ENCODE measurements at regions of chrX and their contacts with region 1.

Region 1: DNA sequence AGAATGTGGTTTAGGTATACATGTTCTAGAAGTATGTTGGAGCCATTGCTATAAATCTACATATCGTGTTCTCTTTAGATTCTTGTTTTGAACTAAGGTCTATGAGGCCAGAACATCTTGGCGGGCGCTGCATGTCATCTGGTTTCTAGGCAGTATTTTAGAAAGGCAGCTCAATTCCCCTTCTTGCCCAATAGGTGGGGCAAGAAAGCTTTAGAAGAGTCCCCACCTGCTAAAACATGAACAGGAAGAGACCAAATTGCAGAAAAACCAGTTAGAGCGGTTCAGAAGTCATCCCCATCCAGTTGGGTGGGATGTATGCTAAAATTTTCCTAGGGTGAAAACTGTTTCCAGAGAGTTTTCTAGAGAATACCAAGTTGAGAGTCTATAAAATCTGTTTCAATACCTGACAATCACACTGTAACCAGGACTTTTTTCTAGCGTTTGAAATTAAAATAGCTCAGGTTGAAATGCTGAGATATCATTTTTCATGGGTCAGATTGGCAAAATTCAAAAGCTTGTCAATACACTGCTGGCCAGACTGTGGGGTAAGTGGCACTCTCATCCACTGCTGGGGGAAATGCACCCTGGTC is 17.5 kb upstream of the SH3KBP1 start:
- DNase-seq: peak; percentile 32
- ATAC-seq: peak; percentile 75
- H3K4me3 Mint-ChIP-seq: no peak overlapping the region
- H3K27ac Mint-ChIP-seq: no peak overlapping the region
- H3K4me1 Mint-ChIP-seq: peaks cover 20% of the 10 kb centered on the region
- H3K27me3 Mint-ChIP-seq: no peaks in the 10 kb centered on the region

Region 2: GRCh38 chrX:19698125-19698524 is 206.7 kb before region 1 on chrX:
- CTCF ChIA-PET with region 1: no interaction called
- POLR2A ChIA-PET with region 1: no interaction called
- DNase-seq: no peak
- ATAC-seq: no peak
- H3K4me3 Mint-ChIP-seq: no peak overlapping the region
- H3K27ac Mint-ChIP-seq: no peak overlapping the region
- H3K4me1 Mint-ChIP-seq: peaks cover 41% of the 10 kb centered on the region
- H3K27me3 Mint-ChIP-seq: no peaks in the 10 kb centered on the region

Region 3: GRCh38 chrX:19725641-19726040 is 179.2 kb before region 1 on chrX:
- CTCF ChIA-PET with region 1: no interaction called
- POLR2A ChIA-PET with region 1: no interaction called
- DNase-seq: peak; percentile 27
- ATAC-seq: peak; percentile 78
- H3K4me3 Mint-ChIP-seq: no peak overlapping the region
- H3K27ac Mint-ChIP-seq: peak overlapping the region; percentile 74
- H3K4me1 Mint-ChIP-seq: peaks cover 60% of the 10 kb centered on the region
- H3K27me3 Mint-ChIP-seq: no peaks in the 10 kb centered on the region

Region 4: GRCh38 chrX:19824603-19825002 is 80.3 kb before region 1 on chrX:
- CTCF ChIA-PET with region 1: no interaction called
- POLR2A ChIA-PET with region 1: no interaction called
- DNase-seq: peak; percentile 37
- ATAC-seq: peak; percentile 39
- H3K4me3 Mint-ChIP-seq: no peak overlapping the region
- H3K27ac Mint-ChIP-seq: no peak overlapping the region
- H3K4me1 Mint-ChIP-seq: peaks cover 39% of the 10 kb centered on the region
- H3K27me3 Mint-ChIP-seq: no peaks in the 10 kb centered on the region

Region 5: GRCh38 chrX:19990556-19991349 is 85.9 kb after region 1 on chrX and contains the start of gene BCLAF3:
- CTCF ChIA-PET with region 1: interaction called, 18 read pairs
- POLR2A ChIA-PET with region 1: no interaction called
- DNase-seq: peak; percentile 88
- ATAC-seq: peak; percentile 91
- H3K4me3 Mint-ChIP-seq: peak within 1 kb of the TSS; percentile 89
- H3K27ac Mint-ChIP-seq: peak within 1 kb of the TSS; percentile 89
- H3K4me1 Mint-ChIP-seq: peaks cover 11% of the 10 kb centered on the region
- H3K27me3 Mint-ChIP-seq: no peaks in the 10 kb centered on the region
- total RNA-seq, gene BCLAF3: 5.1 to 6.7 TPM

Region 6: GRCh38 chrX:20060961-20061748 is 156.3 kb after region 1 on chrX:
- CTCF ChIA-PET with region 1: interaction called, 34 read pairs
- POLR2A ChIA-PET with region 1: no interaction called
- DNase-seq: peak; percentile 21
- ATAC-seq: peak; percentile 44
- H3K4me3 Mint-ChIP-seq: no peak overlapping the region
- H3K27ac Mint-ChIP-seq: no peak overlapping the region
- H3K4me1 Mint-ChIP-seq: peaks cover 21% of the 10 kb centered on the region
- H3K27me3 Mint-ChIP-seq: no peaks in the 10 kb centered on the region

Region 7: GRCh38 chrX:20066968-20067708 is 162.3 kb after region 1 on chrX:
- CTCF ChIA-PET with region 1: interaction called, 34 read pairs
- POLR2A ChIA-PET with region 1: no interaction called
- DNase-seq: peak; percentile 38
- ATAC-seq: peak; percentile 51
- H3K4me3 Mint-ChIP-seq: no peak overlapping the region
- H3K27ac Mint-ChIP-seq: no peak overlapping the region
- H3K4me1 Mint-ChIP-seq: peaks cover 1% of the 10 kb centered on the region
- H3K27me3 Mint-ChIP-seq: peaks cover 4% of the 10 kb centered on the region

Region 8: DNA sequence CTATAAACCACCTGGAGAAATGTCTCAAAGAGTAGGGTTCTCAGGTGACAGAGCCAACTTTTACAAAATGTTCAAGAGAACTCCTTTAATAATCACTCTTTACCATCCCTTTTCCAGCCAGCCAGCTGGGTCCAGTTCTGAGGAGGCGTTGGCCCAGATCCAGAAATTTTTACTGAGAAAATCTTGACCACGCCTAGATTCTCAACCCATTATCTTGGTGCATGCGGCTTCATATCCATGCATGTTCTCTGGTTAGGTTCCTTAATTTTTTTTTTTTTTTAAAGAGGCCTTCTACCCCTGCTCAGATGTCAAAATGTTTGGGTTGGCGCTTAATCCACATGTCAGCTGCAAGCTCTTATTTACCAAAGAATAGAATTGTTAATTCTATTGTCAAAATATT is 223.8 kb after region 1 on chrX:
- CTCF ChIA-PET with region 1: interaction called, 10 read pairs
- POLR2A ChIA-PET with region 1: no interaction called
- DNase-seq: no peak
- ATAC-seq: no peak
- H3K4me3 Mint-ChIP-seq: no peak overlapping the region
- H3K27ac Mint-ChIP-seq: no peak overlapping the region
- H3K4me1 Mint-ChIP-seq: no peaks in the 10 kb centered on the region
- H3K27me3 Mint-ChIP-seq: no peaks in the 10 kb centered on the region